G401 (cell line): ENCODE measurements at regions of chr3 and their contacts with region 1.

Region 1: DNA sequence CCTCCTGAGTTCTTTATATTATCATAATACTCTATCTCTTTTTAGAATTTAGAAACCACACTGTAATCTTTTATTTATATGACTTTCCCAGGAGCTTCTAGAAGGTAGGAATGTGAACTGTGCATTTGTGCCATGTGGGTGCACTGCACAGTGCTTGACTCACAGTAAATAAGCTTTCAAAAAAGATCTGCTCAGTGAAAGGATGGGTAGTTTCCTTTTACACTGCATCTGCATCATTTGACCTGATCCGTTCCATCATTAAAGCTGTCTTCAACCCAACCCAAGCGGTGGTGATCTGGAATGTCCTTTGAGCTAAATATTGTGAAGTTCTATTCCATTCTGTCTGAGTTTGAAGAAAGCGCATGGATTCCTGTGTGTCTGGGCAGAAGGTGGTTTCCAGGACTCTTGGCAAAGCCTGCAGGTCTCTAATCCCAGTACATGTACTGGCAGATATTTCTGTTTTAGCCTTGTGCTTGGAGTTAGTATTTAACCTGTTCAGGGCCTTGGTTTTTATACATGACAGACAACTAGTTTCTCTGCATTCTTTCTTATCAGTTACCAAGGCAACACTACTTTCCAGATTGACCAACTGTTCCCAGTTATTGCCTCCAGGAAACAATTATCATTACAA is 96.7 kb downstream of the DHX30 start:
- DNase-seq: no peak

Region 2: DNA sequence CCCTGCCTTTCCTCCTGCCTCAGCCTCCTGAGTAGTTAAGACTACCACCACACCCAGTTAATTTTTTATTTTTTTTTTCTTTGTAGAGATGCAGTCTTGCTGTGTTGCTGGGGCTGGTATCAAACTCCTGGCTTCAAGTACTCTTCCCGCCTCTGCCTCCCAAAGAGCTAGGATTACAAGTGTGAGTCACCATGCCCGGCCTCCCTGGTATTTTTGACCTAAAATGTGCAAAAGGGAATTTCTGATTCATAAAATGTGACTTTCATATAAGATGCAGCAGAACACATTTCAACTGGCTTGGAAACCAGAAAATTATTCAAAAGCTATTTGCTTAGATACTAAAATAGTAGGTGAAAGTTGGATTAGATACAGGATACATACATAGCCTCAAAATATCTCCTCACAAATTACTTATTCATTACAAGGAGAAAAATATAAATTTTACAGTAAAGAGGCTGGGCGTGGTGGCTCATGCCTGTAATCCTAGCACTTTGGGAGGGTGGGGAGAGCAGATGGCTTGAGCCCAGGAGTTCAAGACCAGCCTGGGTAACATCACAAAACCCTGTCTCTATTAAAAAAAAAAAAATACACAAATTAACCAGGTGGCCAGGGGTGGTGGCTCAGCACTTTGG is 84.6 kb after region 1 on chr3:
- in situ Hi-C with region 1: loop called (anchors 5 kb)
- DNase-seq: no peak

Region 3: GRCh38 chr3:48273594-48274211 is 374.1 kb after region 1 on chr3:
- in situ Hi-C with region 1: no loop called
- DNase-seq: peak; percentile 80